Activated CD4-positive, alpha-beta memory T cell treated with anti-CD3 and anti-CD28 coated beads for 36 hours (primary cell): ENCODE measurements at regions of chr22 and their contacts with region 1.

Region 1: GRCh38 chr22:30159561-30160353 is 79.5 kb downstream of the HORMAD2 start:
- DNase-seq: no peak
- H3K4me3 Mint-ChIP-seq: no peak overlapping the region
- H3K27ac Mint-ChIP-seq: peak overlapping the region; percentile 85
- H3K4me1 Mint-ChIP-seq: peaks cover 58% of the 10 kb centered on the region
- H3K27me3 Mint-ChIP-seq: no peaks in the 10 kb centered on the region

Region 2: GRCh38 chr22:30127749-30128166 is 32.0 kb before region 1 on chr22:
- CTCF ChIA-PET with region 1: no interaction called
- POLR2A ChIA-PET with region 1: no interaction called
- intact Hi-C with region 1: loop called (anchors 1 kb)
- DNase-seq: no peak
- H3K4me3 Mint-ChIP-seq: no peak overlapping the region
- H3K27ac Mint-ChIP-seq: no peak overlapping the region
- H3K4me1 Mint-ChIP-seq: peaks cover 13% of the 10 kb centered on the region
- H3K27me3 Mint-ChIP-seq: no peaks in the 10 kb centered on the region

Region 3: DNA sequence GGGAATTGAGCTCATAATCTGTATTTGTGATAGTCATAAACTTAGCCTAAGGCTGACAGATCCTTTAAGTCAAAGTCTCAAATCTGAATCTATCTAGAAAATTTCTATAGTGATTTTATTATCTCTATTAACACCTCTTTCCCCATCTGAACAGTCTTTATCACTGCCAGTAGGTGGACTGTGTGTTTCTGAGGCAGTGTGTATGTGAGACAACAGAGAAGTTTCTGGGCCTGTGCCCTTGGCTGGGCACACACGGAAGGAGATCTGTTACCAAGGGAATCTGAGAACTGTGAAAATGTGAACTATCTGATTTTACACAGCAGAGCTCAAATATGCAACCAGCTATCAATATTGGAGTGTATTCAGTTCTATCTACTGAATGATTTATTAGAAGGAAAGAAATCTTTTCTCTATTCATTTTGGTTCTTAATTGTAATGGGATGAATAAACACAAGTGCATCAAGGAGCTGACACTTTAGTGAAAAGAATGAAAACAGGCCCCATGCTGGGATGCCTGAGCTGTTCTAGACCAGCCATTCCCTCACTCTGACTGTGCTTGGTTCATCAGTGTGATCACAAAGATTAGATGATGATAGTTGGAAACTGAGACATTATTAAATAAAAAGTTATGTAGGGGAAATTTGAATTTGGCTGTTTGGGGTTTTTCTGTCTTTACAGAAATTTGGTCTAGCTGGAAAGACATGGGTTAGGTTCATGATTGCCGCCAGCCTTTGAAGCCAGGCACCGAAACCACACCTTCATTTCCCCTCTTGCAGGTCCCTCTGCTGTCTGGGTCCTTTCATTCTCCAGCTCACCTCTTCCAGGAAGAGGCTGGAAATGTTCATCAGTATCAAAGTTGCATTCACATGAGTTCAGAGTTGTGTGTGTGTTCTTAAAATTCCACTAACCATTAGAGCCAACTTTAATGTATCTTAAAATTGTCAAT is 18.7 kb after region 1 on chr22:
- CTCF ChIA-PET with region 1: interaction called, 8 read pairs
- POLR2A ChIA-PET with region 1: interaction called, 10 read pairs
- intact Hi-C with region 1: no loop called
- DNase-seq: peak; percentile 73
- H3K4me3 Mint-ChIP-seq: no peak overlapping the region
- H3K27ac Mint-ChIP-seq: peak overlapping the region; percentile 94
- H3K4me1 Mint-ChIP-seq: peaks cover 69% of the 10 kb centered on the region
- H3K27me3 Mint-ChIP-seq: no peaks in the 10 kb centered on the region

Region 4: GRCh38 chr22:30196141-30196879 is 36.6 kb after region 1 on chr22:
- CTCF ChIA-PET with region 1: no interaction called
- POLR2A ChIA-PET with region 1: interaction called, 4 read pairs
- intact Hi-C with region 1: loop called (anchors 1 kb)
- DNase-seq: peak; percentile 84
- H3K4me3 Mint-ChIP-seq: peak overlapping the region; percentile 56
- H3K27ac Mint-ChIP-seq: peak overlapping the region; percentile 97
- H3K4me1 Mint-ChIP-seq: peaks cover 70% of the 10 kb centered on the region
- H3K27me3 Mint-ChIP-seq: no peaks in the 10 kb centered on the region